ENCODE measurements at regions of chr2 and their contacts with region 1.

Region 1: DNA sequence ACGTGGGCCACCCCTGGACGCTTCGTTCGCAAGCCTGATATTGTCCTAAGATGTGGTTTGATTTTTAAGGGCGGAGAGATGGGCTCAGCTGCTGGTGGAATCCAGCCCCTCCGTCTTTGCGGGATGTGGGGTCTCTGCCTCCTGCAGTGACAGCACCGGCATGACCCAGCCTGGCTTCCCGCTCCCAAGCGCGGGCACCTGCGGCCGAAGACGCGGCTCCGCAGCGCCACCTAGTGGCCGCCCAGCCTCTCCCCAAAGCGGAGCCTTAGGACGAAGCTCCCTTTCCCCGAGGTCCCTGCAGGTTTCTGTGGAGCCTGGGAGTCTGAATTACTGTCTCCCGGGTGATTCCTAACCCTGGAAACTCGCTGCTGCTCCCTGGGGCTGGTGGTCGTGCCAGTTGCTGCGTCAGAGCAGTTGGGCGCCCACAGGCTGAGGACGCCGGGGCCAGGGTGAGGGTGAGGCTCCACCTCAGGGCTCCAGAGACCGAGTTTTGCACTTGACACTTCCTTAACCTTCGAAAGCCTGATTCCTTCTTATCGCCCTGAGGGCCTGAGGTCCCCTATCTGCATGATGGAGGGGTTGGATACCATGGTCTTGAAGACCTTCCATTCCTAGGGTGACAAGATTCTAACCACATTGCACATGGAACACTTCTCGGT is 137.5 kb downstream of the TPO start:
- DNase-seq: peak; percentile 55
- H3K4me3 ChIP-seq: no peak overlapping the region
- H3K27ac ChIP-seq: no peak overlapping the region
- H3K4me1 ChIP-seq: peaks cover 0 to 5% (median 3%) of the 10 kb centered on the region in 4 donors
- H3K27me3 ChIP-seq: no peaks in the 10 kb centered on the region
- CTCF ChIP-seq: peak; percentile 79 to 98 (median 96)
- EP300 ChIP-seq: no peak
- POLR2A ChIP-seq: no peak

Region 2: GRCh38 chr2:714005-714741 is 836.6 kb before region 1 on chr2:
- in situ Hi-C with region 1: loop called in 3 of 4 experiments (anchors 10 to 25 kb)
- intact Hi-C with region 1: no loop called
- DNase-seq: peak; percentile 70
- H3K4me3 ChIP-seq: no peak overlapping the region
- H3K27ac ChIP-seq: no peak overlapping the region
- H3K4me1 ChIP-seq: no peaks in the 10 kb centered on the region
- H3K27me3 ChIP-seq: peaks cover 24% of the 10 kb centered on the region
- CTCF ChIP-seq: peak; percentile 53 to 69 (median 66)
- EP300 ChIP-seq: no peak
- POLR2A ChIP-seq: no peak

Region 3: DNA sequence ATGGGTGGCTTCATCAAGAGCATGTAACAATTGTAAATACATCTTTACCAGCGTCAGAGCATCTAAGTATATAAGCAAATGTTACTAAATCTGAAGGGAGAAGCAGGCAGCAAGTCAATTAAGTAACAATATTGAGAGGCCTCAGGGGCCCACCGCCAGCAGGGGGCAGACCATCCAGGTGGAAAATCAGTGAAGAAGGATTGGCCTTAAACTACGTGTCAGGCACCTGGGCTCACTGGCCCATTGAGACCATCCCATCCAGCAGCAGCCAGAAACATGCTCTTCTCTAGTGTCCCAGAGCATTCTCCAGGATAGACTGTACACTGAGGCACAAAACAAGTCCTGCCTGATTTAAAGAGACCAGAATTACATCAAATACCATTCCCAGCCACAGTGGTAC is 696.3 kb before region 1 on chr2:
- in situ Hi-C with region 1: loop called in 2 of 4 experiments (anchors 10 kb)
- intact Hi-C with region 1: no loop called
- DNase-seq: peak; percentile 66
- H3K4me3 ChIP-seq: no peak overlapping the region
- H3K27ac ChIP-seq: no peak overlapping the region
- H3K4me1 ChIP-seq: no peaks in the 10 kb centered on the region
- H3K27me3 ChIP-seq: no peaks in the 10 kb centered on the region
- CTCF ChIP-seq: peak; percentile 48 to 65 (median 54)
- EP300 ChIP-seq: no peak
- POLR2A ChIP-seq: no peak